PC-9 (cell line): ENCODE measurements at regions of chr12 and their contacts with region 1.

Region 1: GRCh38 chr12:106955377-106956047 is at the start of gene TMEM263:
- DNase-seq: peak; percentile 59 to 91
- H3K4me3 ChIP-seq: peak within 1 kb of the TSS; percentile 83
- H3K27ac ChIP-seq: peak within 1 kb of the TSS; percentile 57
- H3K4me1 ChIP-seq: peaks cover 17% of the 10 kb centered on the region; the same call in 1 of the 2 replicates
- H3K27me3 ChIP-seq: peaks cover 13% of the 10 kb centered on the region; the same call in 1 of the 2 replicates
- CTCF ChIP-seq: no peak
- total RNA-seq, gene TMEM263: 32.9 and 33.2 TPM in 2 replicates

Region 2: DNA sequence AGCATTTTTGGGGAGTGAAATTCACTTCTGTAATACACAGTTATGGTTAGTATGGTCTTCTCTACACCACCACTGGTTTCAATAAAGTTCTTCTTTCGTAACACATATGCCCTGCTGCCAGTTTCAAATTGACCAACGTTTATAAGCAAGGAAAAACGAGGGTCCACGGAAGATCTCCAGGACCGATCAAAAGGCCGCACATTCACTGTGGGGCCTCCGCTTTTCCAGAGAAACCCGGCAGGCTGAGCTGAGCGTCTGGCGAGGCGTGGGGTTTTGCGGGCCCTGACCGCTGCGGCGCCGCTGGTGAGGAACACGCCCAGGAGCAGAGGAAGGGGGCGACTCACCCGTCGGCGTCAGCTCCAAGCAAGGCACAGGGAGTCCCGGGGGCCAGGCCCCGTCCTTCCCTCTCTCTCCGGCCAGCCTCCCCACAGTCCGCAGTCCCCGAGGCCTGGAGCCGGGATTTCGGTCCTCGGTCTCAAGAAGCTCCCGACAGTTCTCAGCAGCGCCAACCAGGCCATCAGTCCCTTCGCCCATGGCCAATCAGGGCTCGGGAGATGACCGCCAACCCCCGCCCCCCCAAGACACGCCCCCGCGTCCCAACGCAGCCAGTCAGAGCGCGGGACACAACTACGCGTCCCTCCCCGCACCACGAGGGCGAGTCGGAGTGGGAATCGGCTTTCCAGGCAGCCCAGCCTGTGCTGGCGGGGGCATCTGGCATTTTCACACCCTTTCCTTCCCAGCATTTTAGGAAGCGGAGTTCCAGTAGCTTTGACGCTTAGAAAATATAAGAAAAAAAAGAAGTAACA is 31.3 kb after region 1 on chr12 and contains the start of gene MTERF2:
- CTCF ChIA-PET with region 1: no interaction called
- POLR2A ChIA-PET with region 1: interaction called, 3 read pairs
- intact Hi-C with region 1: loop called (anchors 2 kb)
- DNase-seq: peak; percentile 86 to 89
- H3K4me3 ChIP-seq: peak within 1 kb of the TSS; percentile 74
- H3K27ac ChIP-seq: no peak within 1 kb of the TSS
- H3K4me1 ChIP-seq: peaks cover 12% of the 10 kb centered on the region
- H3K27me3 ChIP-seq: no peaks in the 10 kb centered on the region
- CTCF ChIP-seq: no peak
- total RNA-seq, gene MTERF2: 8.2 and 9.0 TPM in 2 replicates

Region 3: GRCh38 chr12:107109741-107110719 is 154.5 kb after region 1 on chr12:
- CTCF ChIA-PET with region 1: no interaction called
- POLR2A ChIA-PET with region 1: no interaction called
- intact Hi-C with region 1: no loop called
- DNase-seq: no peak
- H3K4me3 ChIP-seq: no peak overlapping the region
- H3K27ac ChIP-seq: no peak overlapping the region
- H3K4me1 ChIP-seq: no peaks in the 10 kb centered on the region
- H3K27me3 ChIP-seq: no peaks in the 10 kb centered on the region; the same call in 1 of the 2 replicates
- CTCF ChIP-seq: no peak

Region 4: GRCh38 chr12:107891972-107892371 is 936.5 kb after region 1 on chr12:
- CTCF ChIA-PET with region 1: no interaction called
- POLR2A ChIA-PET with region 1: no interaction called
- intact Hi-C with region 1: no loop called
- DNase-seq: no peak
- H3K4me3 ChIP-seq: no peak overlapping the region
- H3K27ac ChIP-seq: no peak overlapping the region
- H3K4me1 ChIP-seq: no peaks in the 10 kb centered on the region
- H3K27me3 ChIP-seq: peaks cover 59% of the 10 kb centered on the region
- CTCF ChIP-seq: 0 out of 2 replicates have a peak, but pooled peaks have one; percentile 21